GM12878 (cell line): ENCODE measurements at regions of chr2 and their contacts with region 1.

Region 1: GRCh38 chr2:8477552-8478470 is 204.0 kb upstream of the ID2 start:
- DNase-seq: peak; percentile 95
- ATAC-seq: peak; percentile 52
- H3K4me3 ChIP-seq: peak overlapping the region; percentile 43; the same call in 1 of the 2 replicates
- H3K27ac ChIP-seq: peak overlapping the region; percentile 62
- H3K4me1 ChIP-seq: peaks cover 68% of the 10 kb centered on the region
- H3K27me3 ChIP-seq: no peaks in the 10 kb centered on the region
- CTCF ChIP-seq: no peak
- EP300 ChIP-seq: peak; percentile 94 to 96
- POLR2A ChIP-seq: no peak
- RAD21 ChIP-seq: no peak

Region 2: DNA sequence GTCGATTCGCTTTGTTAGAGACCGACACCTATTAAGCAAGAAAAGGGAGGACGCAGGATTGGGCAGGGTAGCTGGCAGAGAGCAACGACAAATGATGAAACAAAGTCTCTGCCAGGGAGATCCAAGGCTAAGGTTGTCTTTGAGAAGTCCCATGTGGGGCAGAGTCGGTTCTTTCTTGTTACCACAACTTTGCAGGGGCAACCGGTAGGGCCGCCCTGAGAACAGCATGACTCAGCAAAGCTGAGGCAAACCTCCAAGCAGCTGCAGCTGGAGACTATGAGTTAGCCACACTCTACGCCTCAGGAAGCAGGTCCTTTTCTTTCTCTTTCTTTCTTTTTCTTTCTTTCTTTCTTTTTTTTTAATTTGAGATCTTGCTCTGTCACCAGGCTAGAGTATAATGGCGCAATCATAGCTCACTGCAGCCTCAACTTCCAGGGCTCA is 248.2 kb before region 1 on chr2:
- CTCF ChIA-PET with region 1: no interaction called
- POLR2A ChIA-PET with region 1: no interaction called
- RAD21 ChIA-PET with region 1: interaction called, 3 read pairs
- SMC1A ChIA-PET with region 1: interaction called, 3 read pairs
- in situ Hi-C with region 1: no loop called
- intact Hi-C with region 1: loop called (anchors 2 kb)
- DNase-seq: no peak
- ATAC-seq: peak; percentile 92
- H3K4me3 ChIP-seq: no peak overlapping the region
- H3K27ac ChIP-seq: peak overlapping the region; percentile 35
- H3K4me1 ChIP-seq: peaks cover 24% of the 10 kb centered on the region
- H3K27me3 ChIP-seq: no peaks in the 10 kb centered on the region
- CTCF ChIP-seq: no peak
- EP300 ChIP-seq: peak in 1 of 2 experiments; percentile 68; a peak in 2 of 4 replicates
- POLR2A ChIP-seq: no peak
- RAD21 ChIP-seq: no peak; the same call in 1 of the 2 replicates

Region 3: GRCh38 chr2:8441986-8442385 is 35.8 kb before region 1 on chr2:
- CTCF ChIA-PET with region 1: interaction called, 4 read pairs
- POLR2A ChIA-PET with region 1: interaction called, 3 read pairs
- RAD21 ChIA-PET with region 1: interaction called, 4 read pairs
- SMC1A ChIA-PET with region 1: interaction called, 20 read pairs
- in situ Hi-C with region 1: no loop called
- intact Hi-C with region 1: no loop called
- DNase-seq: no peak
- ATAC-seq: peak; percentile 89
- H3K4me3 ChIP-seq: no peak overlapping the region
- H3K27ac ChIP-seq: no peak overlapping the region
- H3K4me1 ChIP-seq: peaks cover 14% of the 10 kb centered on the region
- H3K27me3 ChIP-seq: no peaks in the 10 kb centered on the region
- CTCF ChIP-seq: no peak
- EP300 ChIP-seq: peak; percentile 15 to 45; a peak in 2 of 4 replicates
- POLR2A ChIP-seq: no peak
- RAD21 ChIP-seq: no peak

Region 4: DNA sequence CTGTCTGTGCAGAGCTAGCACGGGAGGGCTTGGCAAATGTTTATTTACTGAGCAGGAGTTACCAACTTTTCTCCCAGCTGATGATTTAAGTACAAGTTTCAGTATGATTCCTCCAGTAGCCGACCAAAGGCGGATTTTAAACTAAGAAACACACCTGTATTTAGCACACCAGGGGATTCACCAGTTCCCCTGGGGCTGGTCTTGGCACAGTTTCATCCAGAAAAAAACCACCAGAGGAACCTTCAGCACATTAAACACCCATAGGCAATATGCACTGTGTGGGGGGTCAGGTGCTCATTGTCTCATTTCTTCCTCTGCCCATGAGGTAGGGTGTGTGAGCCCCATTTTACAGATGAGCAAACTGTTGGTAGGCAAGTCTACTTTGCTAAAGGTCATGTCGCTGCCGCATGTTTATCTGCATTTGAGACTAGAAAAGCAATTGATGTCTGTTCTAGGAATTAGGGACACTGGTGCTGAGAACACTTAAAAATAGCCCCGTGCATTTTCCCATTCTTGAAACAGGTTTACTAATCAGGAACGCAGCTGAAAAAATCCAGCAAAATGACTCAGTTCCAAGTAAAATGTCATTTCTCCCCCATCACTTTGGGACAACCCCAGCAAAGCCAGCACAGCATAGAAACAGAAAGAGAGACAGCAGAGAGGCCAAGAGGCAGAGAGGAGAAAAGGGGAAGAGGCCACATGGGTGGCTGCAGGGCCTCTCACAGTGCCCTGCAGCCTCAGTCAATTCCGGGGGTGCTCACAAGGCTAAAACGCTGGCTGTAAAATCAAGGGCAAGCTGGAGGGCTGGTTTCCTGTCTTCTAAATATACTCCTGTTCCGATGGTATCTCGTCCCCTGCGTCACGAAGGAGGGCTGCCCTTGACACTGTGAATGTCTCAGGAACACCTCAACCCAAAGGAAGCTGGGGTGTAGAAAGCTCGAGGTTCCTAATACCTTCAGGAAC is 37.3 kb after region 1 on chr2:
- CTCF ChIA-PET with region 1: interaction called, 6 read pairs
- POLR2A ChIA-PET with region 1: interaction called, 73 read pairs
- RAD21 ChIA-PET with region 1: interaction called, 155 read pairs
- SMC1A ChIA-PET with region 1: interaction called, 121 read pairs
- in situ Hi-C with region 1: no loop called
- intact Hi-C with region 1: no loop called
- DNase-seq: peak; percentile 99
- ATAC-seq: peak; percentile 82
- H3K4me3 ChIP-seq: peak overlapping the region; percentile 51; the same call in 1 of the 2 replicates
- H3K27ac ChIP-seq: peak overlapping the region; percentile 93
- H3K4me1 ChIP-seq: peaks cover 46% of the 10 kb centered on the region
- H3K27me3 ChIP-seq: no peaks in the 10 kb centered on the region
- CTCF ChIP-seq: no peak
- EP300 ChIP-seq: peak; percentile 76 to 95; a peak in 3 of 4 replicates
- POLR2A ChIP-seq: no peak
- RAD21 ChIP-seq: peak; percentile 36; the same call in 1 of the 2 replicates

Region 5: GRCh38 chr2:8539743-8540551 is 62.1 kb after region 1 on chr2:
- CTCF ChIA-PET with region 1: interaction called, 15 read pairs
- POLR2A ChIA-PET with region 1: interaction called, 7 read pairs
- RAD21 ChIA-PET with region 1: interaction called, 39 read pairs
- SMC1A ChIA-PET with region 1: interaction called, 19 read pairs
- in situ Hi-C with region 1: no loop called
- intact Hi-C with region 1: loop called (anchors 2 kb)
- DNase-seq: no peak
- ATAC-seq: no peak
- H3K4me3 ChIP-seq: no peak overlapping the region
- H3K27ac ChIP-seq: no peak overlapping the region
- H3K4me1 ChIP-seq: peaks cover 58% of the 10 kb centered on the region
- H3K27me3 ChIP-seq: no peaks in the 10 kb centered on the region
- CTCF ChIP-seq: no peak
- EP300 ChIP-seq: no peak
- POLR2A ChIP-seq: no peak
- RAD21 ChIP-seq: no peak

Region 6: GRCh38 chr2:8606226-8606625 is 128.4 kb after region 1 on chr2:
- CTCF ChIA-PET with region 1: no interaction called
- POLR2A ChIA-PET with region 1: no interaction called
- RAD21 ChIA-PET with region 1: interaction called, 4 read pairs
- SMC1A ChIA-PET with region 1: no interaction called
- in situ Hi-C with region 1: no loop called
- intact Hi-C with region 1: loop called (anchors 5 kb)
- DNase-seq: peak; percentile 82
- ATAC-seq: peak; percentile 90
- H3K4me3 ChIP-seq: no peak overlapping the region
- H3K27ac ChIP-seq: peak overlapping the region; percentile 23
- H3K4me1 ChIP-seq: peaks cover 30% of the 10 kb centered on the region
- H3K27me3 ChIP-seq: no peaks in the 10 kb centered on the region
- CTCF ChIP-seq: no peak
- EP300 ChIP-seq: peak; percentile 38 to 40; a peak in 2 of 4 replicates
- POLR2A ChIP-seq: no peak
- RAD21 ChIP-seq: no peak

Region 7: GRCh38 chr2:8719528-8719927 is 241.7 kb after region 1 on chr2:
- CTCF ChIA-PET with region 1: no interaction called
- POLR2A ChIA-PET with region 1: no interaction called
- RAD21 ChIA-PET with region 1: no interaction called
- SMC1A ChIA-PET with region 1: no interaction called
- in situ Hi-C with region 1: no loop called
- intact Hi-C with region 1: no loop called
- DNase-seq: no peak
- ATAC-seq: no peak
- H3K4me3 ChIP-seq: no peak overlapping the region
- H3K27ac ChIP-seq: no peak overlapping the region
- H3K4me1 ChIP-seq: no peaks in the 10 kb centered on the region
- H3K27me3 ChIP-seq: no peaks in the 10 kb centered on the region
- CTCF ChIP-seq: no peak
- EP300 ChIP-seq: no peak
- POLR2A ChIP-seq: no peak
- RAD21 ChIP-seq: no peak